ENCODE measurements at regions of chr9 and their contacts with region 1.

Region 1: GRCh38 chr9:122350638-122351355 is 20.0 kb upstream of the PTGS1 start:
- DNase-seq: peak; percentile 49
- ATAC-seq: peak; percentile 88
- H3K4me3 ChIP-seq: no peak overlapping the region
- H3K27ac ChIP-seq: no peak overlapping the region
- H3K4me1 ChIP-seq: peaks cover 28% of the 10 kb centered on the region
- H3K27me3 ChIP-seq: no peaks in the 10 kb centered on the region; a peak in 1 of 5 replicates
- CTCF ChIP-seq: peak; percentile 97
- EP300 ChIP-seq: no peak
- POLR2A ChIP-seq: no peak
- RAD21 ChIP-seq: peak; percentile 97

Region 2: GRCh38 chr9:122099271-122099869 is 251.4 kb before region 1 on chr9:
- CTCF ChIA-PET with region 1: interaction called, 29 read pairs
- POLR2A ChIA-PET with region 1: no interaction called
- in situ Hi-C with region 1: loop called (anchors 5 kb)
- intact Hi-C with region 1: loop called (anchors 1 kb)
- DNase-seq: peak; percentile 60
- ATAC-seq: peak; percentile 88
- H3K4me3 ChIP-seq: peak overlapping the region in 1 of 3 experiments; percentile 56; a peak in 1 of 6 replicates
- H3K27ac ChIP-seq: no peak overlapping the region
- H3K4me1 ChIP-seq: peaks cover 23% of the 10 kb centered on the region
- H3K27me3 ChIP-seq: peaks cover 0 to 13% of the 10 kb centered on the region in 2 experiments
- CTCF ChIP-seq: peak; percentile 83
- EP300 ChIP-seq: no peak
- POLR2A ChIP-seq: no peak
- RAD21 ChIP-seq: peak; percentile 81

Region 3: DNA sequence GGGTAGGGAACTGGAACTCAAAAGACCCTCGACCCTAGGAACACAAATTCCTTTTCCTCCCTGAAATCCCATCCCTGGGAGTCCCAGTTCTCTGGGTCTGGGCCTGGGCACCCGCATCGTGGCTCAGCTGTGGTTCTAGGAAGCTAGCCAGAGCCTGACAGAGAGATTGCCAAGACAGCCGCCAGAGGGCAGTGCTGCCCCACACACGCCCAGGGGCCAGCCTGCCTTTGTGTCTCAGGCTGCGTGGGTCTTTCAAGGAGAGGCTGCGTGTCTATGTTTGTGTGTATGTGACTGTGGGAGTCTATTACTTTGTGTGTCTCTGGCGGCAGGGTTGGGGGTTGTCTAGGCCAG is 225.7 kb before region 1 on chr9:
- CTCF ChIA-PET with region 1: interaction called, 95 read pairs
- POLR2A ChIA-PET with region 1: no interaction called
- in situ Hi-C with region 1: loop called (anchors 5 kb)
- intact Hi-C with region 1: loop called (anchors 1 kb)
- DNase-seq: peak; percentile 53
- ATAC-seq: peak; percentile 84
- H3K4me3 ChIP-seq: peak overlapping the region in 2 of 3 experiments; percentile 21 to 64; a peak in 2 of 6 replicates
- H3K27ac ChIP-seq: no peak overlapping the region
- H3K4me1 ChIP-seq: peaks cover 17% of the 10 kb centered on the region
- H3K27me3 ChIP-seq: peaks cover 0 to 5% of the 10 kb centered on the region in 2 experiments; a peak in 1 of 5 replicates
- CTCF ChIP-seq: peak; percentile 99
- EP300 ChIP-seq: no peak
- POLR2A ChIP-seq: no peak
- RAD21 ChIP-seq: peak; percentile 98

Region 4: DNA sequence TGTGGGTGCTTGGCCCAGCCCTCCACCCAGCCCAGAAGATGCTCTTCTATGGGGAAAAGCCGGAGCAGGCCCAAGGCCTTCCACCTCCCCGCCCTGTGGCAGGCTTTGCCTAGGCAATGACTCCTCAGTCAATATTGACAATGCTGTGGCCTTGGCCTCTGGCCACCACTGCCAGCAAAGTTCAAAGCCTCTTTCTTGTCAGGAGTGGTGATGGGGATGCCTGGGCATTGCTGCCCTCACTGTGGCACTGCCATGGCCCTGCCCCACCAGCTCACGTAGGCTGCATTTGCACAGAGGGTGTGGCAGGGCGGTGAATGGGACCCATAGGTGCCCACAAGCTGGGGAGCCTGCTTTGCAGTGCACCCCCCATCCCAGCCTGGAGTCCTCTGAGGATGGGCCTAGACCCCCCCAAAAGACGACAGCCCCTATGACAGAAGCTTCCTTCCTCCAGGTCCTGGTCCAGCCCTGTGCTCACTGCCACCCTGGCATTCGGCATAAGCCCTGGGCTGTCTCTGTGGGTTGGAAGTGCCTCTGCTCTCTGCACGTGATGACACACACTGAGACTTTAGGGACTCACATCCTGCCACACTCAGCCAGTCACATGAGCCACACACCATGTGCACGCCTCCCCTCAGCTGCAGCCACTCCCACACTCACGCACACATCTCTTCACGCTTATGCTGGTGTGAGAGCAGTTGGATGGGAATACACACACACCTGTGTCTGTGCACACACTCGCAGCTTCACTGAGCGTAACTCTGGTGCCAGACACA is 160.0 kb before region 1 on chr9:
- CTCF ChIA-PET with region 1: no interaction called
- POLR2A ChIA-PET with region 1: no interaction called
- in situ Hi-C with region 1: no loop called
- intact Hi-C with region 1: loop called (anchors 1 kb)
- DNase-seq: peak; percentile 52
- ATAC-seq: peak; percentile 17
- H3K4me3 ChIP-seq: no peak overlapping the region
- H3K27ac ChIP-seq: no peak overlapping the region
- H3K4me1 ChIP-seq: peaks cover 75% of the 10 kb centered on the region
- H3K27me3 ChIP-seq: no peaks in the 10 kb centered on the region
- CTCF ChIP-seq: peak; percentile 33; the same call in 1 of the 2 replicates
- EP300 ChIP-seq: peak in 1 of 2 experiments; percentile 81; a peak in 2 of 4 replicates
- POLR2A ChIP-seq: no peak
- RAD21 ChIP-seq: no peak

Region 5: DNA sequence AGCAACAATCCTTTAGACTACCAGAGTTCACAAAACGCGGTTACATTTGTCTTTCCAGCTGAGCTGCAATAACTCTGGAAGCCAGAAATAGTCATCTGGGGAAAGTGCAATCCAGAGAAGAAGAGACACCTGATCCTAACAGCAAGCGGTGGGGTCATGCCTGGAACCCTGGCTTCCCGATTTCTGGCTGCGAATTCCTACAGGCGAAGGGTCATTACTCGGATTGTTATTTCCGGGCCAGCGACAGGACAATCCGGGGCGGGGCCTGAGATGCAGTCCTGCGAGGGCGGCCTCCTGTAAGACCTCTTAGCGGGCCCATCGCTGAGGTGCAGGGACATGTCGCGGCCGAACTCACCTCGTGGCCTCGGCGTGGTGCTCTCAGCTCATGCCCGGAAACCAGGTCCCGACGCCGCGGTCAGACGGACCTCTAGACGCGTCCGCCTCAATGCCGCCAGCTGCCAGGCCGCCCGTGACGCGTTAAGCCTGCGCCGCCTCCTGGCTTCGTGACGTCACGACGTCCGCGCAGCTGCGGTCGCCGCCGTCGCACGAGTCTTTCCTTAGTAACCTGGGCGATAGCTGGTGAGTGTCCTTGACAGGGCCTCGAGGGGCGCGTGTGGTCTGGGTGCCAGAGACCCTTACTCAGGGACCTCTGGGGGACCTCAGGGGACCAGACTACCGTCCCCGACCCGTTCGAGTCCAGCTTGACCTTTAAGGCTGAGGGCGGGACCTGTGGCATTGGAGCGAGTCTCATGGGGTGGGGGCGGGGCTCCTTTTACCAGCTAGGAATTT is 86.2 kb before region 1 on chr9 and contains the starts of genes MRRF and RBM18:
- CTCF ChIA-PET with region 1: no interaction called
- POLR2A ChIA-PET with region 1: no interaction called
- in situ Hi-C with region 1: no loop called
- intact Hi-C with region 1: loop called (anchors 5 kb)
- DNase-seq: peak; percentile 78
- ATAC-seq: peak; percentile 85
- H3K4me3 ChIP-seq: peak within 1 kb of the TSS; percentile 69 to 83 (median 75)
- H3K27ac ChIP-seq: peak within 1 kb of the TSS; percentile 84
- H3K4me1 ChIP-seq: peaks cover 44% of the 10 kb centered on the region
- H3K27me3 ChIP-seq: no peaks in the 10 kb centered on the region; a peak in 1 of 5 replicates
- CTCF ChIP-seq: peak; percentile 44; the same call in 1 of the 2 replicates
- EP300 ChIP-seq: peak in 1 of 2 experiments; percentile 66; a peak in 1 of 4 replicates
- POLR2A ChIP-seq: peak; percentile 75 to 92
- RAD21 ChIP-seq: 0 out of 2 replicates have a peak, but pooled peaks have one; percentile 26
- total RNA-seq, gene MRRF: 37.3 and 47.2 TPM in 2 replicates
- total RNA-seq, gene RBM18: 16.6 and 29.5 TPM in 2 replicates

Region 6: GRCh38 chr9:122426723-122427122 is 75.9 kb after region 1 on chr9:
- CTCF ChIA-PET with region 1: no interaction called
- POLR2A ChIA-PET with region 1: no interaction called
- in situ Hi-C with region 1: no loop called
- intact Hi-C with region 1: no loop called
- DNase-seq: no peak
- ATAC-seq: no peak
- H3K4me3 ChIP-seq: no peak overlapping the region
- H3K27ac ChIP-seq: no peak overlapping the region
- H3K4me1 ChIP-seq: no peaks in the 10 kb centered on the region
- H3K27me3 ChIP-seq: peaks cover 0 to 5% of the 10 kb centered on the region in 2 experiments; a peak in 2 of 5 replicates
- CTCF ChIP-seq: no peak
- EP300 ChIP-seq: no peak
- POLR2A ChIP-seq: no peak
- RAD21 ChIP-seq: no peak

Region 7: DNA sequence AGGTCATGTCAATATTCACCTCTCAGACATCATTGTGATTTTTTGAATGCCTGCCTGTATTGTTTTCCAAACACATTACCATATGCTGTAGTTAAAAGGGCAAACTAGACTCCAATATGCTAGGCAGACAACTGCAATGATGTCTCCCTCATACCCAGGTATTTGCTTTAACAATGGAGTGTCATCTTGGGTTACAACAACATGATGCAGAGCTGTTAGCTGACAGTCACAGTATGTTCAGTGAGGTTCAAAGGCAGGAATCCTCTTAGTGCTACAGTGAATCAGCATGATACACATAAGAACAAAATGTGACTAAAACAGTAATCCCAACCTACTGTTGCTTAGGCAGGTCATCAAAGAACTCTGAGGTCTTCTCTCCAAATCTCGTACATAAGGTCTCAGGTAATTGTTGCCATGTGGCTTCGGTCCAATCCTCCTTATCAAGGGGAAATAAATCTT is 102.9 kb after region 1 on chr9:
- CTCF ChIA-PET with region 1: no interaction called
- POLR2A ChIA-PET with region 1: no interaction called
- in situ Hi-C with region 1: no loop called
- intact Hi-C with region 1: loop called (anchors 1 kb)
- DNase-seq: no peak
- ATAC-seq: no peak
- H3K4me3 ChIP-seq: no peak overlapping the region
- H3K27ac ChIP-seq: no peak overlapping the region
- H3K4me1 ChIP-seq: no peaks in the 10 kb centered on the region
- H3K27me3 ChIP-seq: no peaks in the 10 kb centered on the region
- CTCF ChIP-seq: no peak
- EP300 ChIP-seq: no peak
- POLR2A ChIP-seq: no peak
- RAD21 ChIP-seq: no peak

Region 8: GRCh38 chr9:122810306-122810946 is 459.6 kb after region 1 on chr9:
- CTCF ChIA-PET with region 1: interaction called, 3 read pairs
- POLR2A ChIA-PET with region 1: no interaction called
- in situ Hi-C with region 1: loop called (anchors 25 kb)
- intact Hi-C with region 1: loop called (anchors 1 kb)
- DNase-seq: peak; percentile 75
- ATAC-seq: peak; percentile 93
- H3K4me3 ChIP-seq: no peak overlapping the region
- H3K27ac ChIP-seq: no peak overlapping the region
- H3K4me1 ChIP-seq: peaks cover 27% of the 10 kb centered on the region
- H3K27me3 ChIP-seq: no peaks in the 10 kb centered on the region
- CTCF ChIP-seq: peak; percentile 93
- EP300 ChIP-seq: no peak
- POLR2A ChIP-seq: no peak
- RAD21 ChIP-seq: peak; percentile 82